ENCODE measurements at regions of chr16 and their contacts with region 1.

Region 1: DNA sequence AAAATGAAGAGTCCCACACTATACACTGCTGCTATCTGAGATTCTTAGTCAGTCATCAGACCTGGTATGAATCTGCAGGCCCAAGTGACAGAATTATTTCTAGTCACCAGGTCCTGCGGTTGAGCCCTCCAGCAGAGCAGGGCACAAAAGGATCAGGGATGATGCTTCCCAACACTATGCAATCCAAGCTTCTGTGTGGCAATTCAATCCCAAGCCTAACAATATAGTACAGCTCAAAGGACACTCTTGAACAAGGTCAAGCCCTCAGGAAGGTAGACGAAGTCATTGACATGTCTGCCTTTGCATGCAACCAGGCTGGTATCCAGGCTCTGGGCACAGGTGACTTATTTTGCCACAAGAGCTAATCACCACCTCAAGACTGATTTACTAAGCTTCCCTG is 5.8 kb downstream of the DCUN1D3 start:
- DNase-seq: no peak
- ATAC-seq: no peak
- H3K4me3 ChIP-seq: no peak overlapping the region
- H3K27ac ChIP-seq: no peak overlapping the region
- H3K4me1 ChIP-seq: peaks cover 6% of the 10 kb centered on the region
- H3K27me3 ChIP-seq: no peaks in the 10 kb centered on the region
- CTCF ChIP-seq: no peak
- POLR2A ChIP-seq: no peak
- RAD21 ChIP-seq: no peak

Region 2: DNA sequence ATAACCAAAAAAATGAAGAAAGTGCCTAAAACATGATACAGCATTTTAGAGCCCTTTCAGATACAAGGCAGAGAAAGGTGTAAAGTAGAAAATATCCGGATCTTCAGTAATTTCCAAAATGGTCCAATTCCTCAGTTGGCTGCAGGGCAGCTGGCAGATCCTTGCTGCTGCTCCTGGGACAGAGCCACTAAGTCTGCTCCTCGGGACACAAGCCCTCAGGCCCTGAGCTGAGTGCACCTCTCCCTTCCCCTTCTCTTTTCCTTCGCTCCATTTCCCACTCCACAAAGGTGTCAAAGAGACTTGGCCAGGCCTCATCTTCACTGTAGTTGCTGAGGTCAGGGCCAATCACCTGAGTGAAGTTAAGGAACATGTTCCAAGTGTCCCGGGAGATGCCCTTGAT is 34.7 kb before region 1 on chr16:
- CTCF ChIA-PET with region 1: no interaction called
- POLR2A ChIA-PET with region 1: no interaction called
- dilution Hi-C with region 1: no loop called
- in situ Hi-C with region 1: no loop called
- intact Hi-C with region 1: loop called (anchors 2 kb)
- DNase-seq: no peak
- ATAC-seq: no peak
- H3K4me3 ChIP-seq: no peak overlapping the region
- H3K27ac ChIP-seq: no peak overlapping the region
- H3K4me1 ChIP-seq: no peaks in the 10 kb centered on the region; the same call in 1 of the 2 replicates
- H3K27me3 ChIP-seq: no peaks in the 10 kb centered on the region
- CTCF ChIP-seq: no peak
- POLR2A ChIP-seq: no peak
- RAD21 ChIP-seq: no peak

Region 3: GRCh38 chr16:21162661-21163151 is 268.3 kb after region 1 on chr16:
- CTCF ChIA-PET with region 1: no interaction called
- POLR2A ChIA-PET with region 1: no interaction called
- dilution Hi-C with region 1: no loop called
- in situ Hi-C with region 1: no loop called
- intact Hi-C with region 1: no loop called
- DNase-seq: peak; percentile 35
- ATAC-seq: no peak
- H3K4me3 ChIP-seq: no peak overlapping the region
- H3K27ac ChIP-seq: no peak overlapping the region
- H3K4me1 ChIP-seq: peaks cover 18% of the 10 kb centered on the region
- H3K27me3 ChIP-seq: no peaks in the 10 kb centered on the region
- CTCF ChIP-seq: no peak
- POLR2A ChIP-seq: no peak
- RAD21 ChIP-seq: no peak

Measured in IMR-90 (cell line).